PC-9 (cell line): ENCODE measurements at regions of chr19 and their contacts with region 1.

Region 1: GRCh38 chr19:9070066-9070465 is 16.8 kb upstream of the OR1M1 start:
- DNase-seq: peak; percentile 42 to 66
- H3K4me3 ChIP-seq: no peak overlapping the region
- H3K27ac ChIP-seq: no peak overlapping the region
- H3K4me1 ChIP-seq: peaks cover 16% of the 10 kb centered on the region
- H3K27me3 ChIP-seq: no peaks in the 10 kb centered on the region
- CTCF ChIP-seq: no peak

Region 2: DNA sequence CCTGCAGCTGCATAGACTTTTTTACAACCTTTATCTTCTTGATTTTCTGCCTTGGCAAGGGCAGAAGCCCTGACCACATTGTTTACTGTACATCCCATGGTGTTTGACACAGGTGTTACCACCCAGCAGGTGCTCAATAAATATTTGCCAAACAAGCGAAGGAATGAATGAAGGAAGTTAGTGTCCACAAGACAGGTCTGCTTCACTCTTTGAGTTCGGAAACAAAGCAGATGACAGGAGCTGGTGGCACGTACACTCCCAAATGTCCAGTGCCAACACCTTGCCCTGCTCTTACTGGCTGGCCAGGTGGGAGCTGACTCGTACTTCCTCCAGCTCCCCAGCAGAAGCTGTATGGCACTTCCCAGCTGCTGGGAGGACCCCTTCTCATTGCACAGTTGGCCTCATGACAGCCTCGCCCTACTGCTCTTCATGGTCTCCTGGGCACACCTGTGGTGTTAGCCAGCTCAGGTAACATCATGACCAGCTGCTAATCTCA is 37.9 kb before region 1 on chr19:
- CTCF ChIA-PET with region 1: no interaction called
- POLR2A ChIA-PET with region 1: interaction called, 3 read pairs
- intact Hi-C with region 1: loop called (anchors 1 kb)
- DNase-seq: peak; percentile 81 to 100
- H3K4me3 ChIP-seq: no peak overlapping the region
- H3K27ac ChIP-seq: peak overlapping the region; percentile 52
- H3K4me1 ChIP-seq: peaks cover 27% of the 10 kb centered on the region
- H3K27me3 ChIP-seq: no peaks in the 10 kb centered on the region
- CTCF ChIP-seq: no peak

Region 3: DNA sequence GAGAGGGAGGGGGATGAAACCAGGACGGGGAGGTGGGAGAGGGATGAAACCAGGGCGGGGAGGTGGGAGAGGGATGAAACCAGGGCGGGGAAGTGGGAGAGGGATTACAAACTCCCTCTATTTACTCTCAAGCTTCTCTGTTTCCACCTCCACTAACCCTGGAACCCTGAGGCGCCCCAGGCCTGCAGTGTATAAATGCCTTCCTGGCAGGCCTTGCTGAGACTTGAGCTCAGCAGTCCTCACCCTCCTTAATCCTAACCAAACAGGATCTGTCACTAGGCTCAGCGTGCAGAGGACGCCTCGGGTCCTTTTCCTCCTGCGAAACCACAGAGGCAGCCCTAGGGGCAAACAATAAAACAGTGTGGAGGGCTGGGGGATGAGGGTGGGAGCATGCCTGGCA is 15.3 kb before region 1 on chr19:
- CTCF ChIA-PET with region 1: interaction called, 3 read pairs
- POLR2A ChIA-PET with region 1: interaction called, 17 read pairs
- intact Hi-C with region 1: loop called (anchors 1 kb)
- DNase-seq: peak; percentile 90 to 98
- H3K4me3 ChIP-seq: peak overlapping the region; percentile 35; the same call in 1 of the 2 replicates
- H3K27ac ChIP-seq: peak overlapping the region; percentile 92
- H3K4me1 ChIP-seq: peaks cover 73% of the 10 kb centered on the region
- H3K27me3 ChIP-seq: no peaks in the 10 kb centered on the region
- CTCF ChIP-seq: no peak

Region 4: DNA sequence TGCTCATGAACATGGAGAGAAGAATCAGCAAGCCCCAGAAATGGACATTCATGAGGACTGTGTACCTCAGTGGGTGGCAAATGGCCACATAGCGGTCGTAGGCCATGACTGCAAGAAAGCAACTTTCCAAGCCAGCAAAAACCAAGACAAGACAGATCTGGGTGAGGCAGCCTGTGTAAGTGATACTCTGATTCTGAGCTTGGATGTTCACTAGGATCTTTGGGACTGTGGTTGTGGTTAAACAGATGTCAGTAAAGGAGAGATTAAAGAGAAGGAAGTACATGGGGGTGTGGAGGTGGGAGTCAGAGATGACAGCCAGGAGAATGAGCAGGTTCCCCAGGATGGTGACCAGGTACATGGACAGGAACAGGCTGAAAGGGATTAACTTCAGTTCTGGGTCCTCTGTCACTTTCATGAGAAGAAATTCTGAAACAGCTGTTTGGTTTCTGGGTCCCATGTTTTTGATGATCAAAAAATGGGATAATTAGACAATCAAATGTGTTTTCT is 45.3 kb after region 1 on chr19 and contains the start of gene OR7G1:
- CTCF ChIA-PET with region 1: no interaction called
- POLR2A ChIA-PET with region 1: no interaction called
- intact Hi-C with region 1: no loop called
- DNase-seq: no peak
- H3K4me3 ChIP-seq: no peak within 1 kb of the TSS
- H3K27ac ChIP-seq: no peak within 1 kb of the TSS
- H3K4me1 ChIP-seq: no peaks in the 10 kb centered on the region
- H3K27me3 ChIP-seq: no peaks in the 10 kb centered on the region; the same call in 1 of the 2 replicates
- CTCF ChIP-seq: no peak
- total RNA-seq, gene OR7G1: not detected in 2 replicates